Ascending aorta (tissue), 2 donors: ENCODE measurements at regions of chr21 and their contacts with region 1.

Region 1: DNA sequence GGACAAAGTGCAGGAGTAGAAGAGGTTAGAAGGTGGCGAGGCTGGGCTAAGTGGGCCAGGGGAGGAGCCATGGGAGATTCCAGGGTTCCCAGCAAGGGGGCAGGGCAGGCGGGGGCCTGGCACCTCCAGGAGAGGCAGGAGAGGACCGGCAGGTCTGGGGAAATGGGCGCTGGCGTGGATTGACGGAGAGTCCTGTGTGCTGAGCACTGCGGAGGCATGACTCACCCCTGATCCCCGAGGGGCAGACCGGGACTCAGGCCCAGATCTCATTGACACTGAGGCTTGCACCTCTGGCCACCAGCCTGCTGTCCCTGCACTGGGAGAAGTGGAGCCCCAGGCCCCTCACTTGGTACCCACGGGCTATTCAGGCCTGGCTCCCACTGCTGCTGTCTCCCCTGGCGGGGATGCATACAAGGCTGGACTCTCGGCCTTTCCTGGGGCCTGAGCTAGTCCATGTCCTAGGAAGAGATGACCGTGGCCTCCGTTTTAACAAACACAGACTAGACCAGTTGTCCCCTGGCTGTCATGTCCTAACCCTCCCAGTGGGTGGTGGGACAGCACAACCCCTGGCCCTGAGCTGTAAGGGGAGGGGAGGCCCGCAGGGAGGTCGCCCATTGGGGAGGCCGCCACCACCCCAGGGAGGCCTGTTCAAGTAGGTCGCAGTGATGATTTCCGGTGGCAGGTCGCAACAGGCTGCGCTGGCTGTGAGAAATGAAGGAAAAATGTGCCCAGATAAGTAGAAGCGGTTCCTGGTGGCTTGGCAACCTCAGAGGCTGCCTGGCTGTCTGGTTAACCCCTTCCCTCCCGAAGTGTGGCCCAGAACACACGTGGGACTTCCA is 39.7 kb downstream of the RIPK4 start:
- DNase-seq: peak; percentile 62 to 93
- H3K4me3 ChIP-seq: no peak overlapping the region
- H3K27ac ChIP-seq: peak overlapping the region; percentile 83 to 91
- H3K4me1 ChIP-seq: peaks cover 9 to 17% of the 10 kb centered on the region in 2 donors
- H3K27me3 ChIP-seq: no peaks in the 10 kb centered on the region
- CTCF ChIP-seq: no peak

Region 2: GRCh38 chr21:41761211-41762181 is 34.3 kb after region 1 on chr21:
- intact Hi-C with region 1: loop called (anchors 2 kb)
- DNase-seq: peak; percentile 33 to 80
- H3K4me3 ChIP-seq: peak overlapping the region; percentile 36 to 59
- H3K27ac ChIP-seq: peak overlapping the region; percentile 56 to 74
- H3K4me1 ChIP-seq: peaks cover 5 to 12% of the 10 kb centered on the region in 2 donors
- H3K27me3 ChIP-seq: no peaks in the 10 kb centered on the region
- CTCF ChIP-seq: no peak

Region 3: DNA sequence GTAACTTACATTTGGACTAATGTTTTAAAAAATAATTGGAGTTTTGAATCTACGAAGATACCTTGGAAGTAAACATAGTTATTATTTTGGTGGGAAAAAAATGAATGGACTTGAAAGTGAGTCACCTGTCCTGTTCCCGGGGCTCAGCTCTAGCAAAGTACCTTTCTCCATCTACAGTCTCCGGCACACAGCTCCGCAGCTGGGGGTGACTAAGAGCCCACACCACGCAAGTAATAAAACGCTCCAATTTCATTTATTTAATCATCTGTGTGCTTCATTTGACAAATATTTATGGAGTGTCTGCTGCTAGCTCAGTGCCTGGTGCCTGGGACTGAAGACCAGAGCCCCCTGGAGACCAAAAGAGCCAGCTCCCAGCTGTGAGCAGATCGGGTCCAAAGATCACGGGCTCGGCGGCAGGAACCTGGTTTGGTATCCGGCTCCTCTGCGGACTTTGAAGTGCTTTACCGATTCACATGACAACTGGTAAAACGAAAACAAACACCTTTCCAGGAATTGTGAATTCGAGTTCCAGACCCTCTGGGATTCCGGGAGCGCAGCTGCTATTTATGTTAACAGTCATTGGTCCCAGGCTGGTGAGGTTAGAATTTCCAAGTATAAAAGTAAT is 41.4 kb after region 1 on chr21:
- intact Hi-C with region 1: loop called (anchors 2 kb)
- DNase-seq: peak in 1 of 2 donors; percentile 74
- H3K4me3 ChIP-seq: peak overlapping the region; percentile 58 to 60
- H3K27ac ChIP-seq: peak overlapping the region; percentile 74 to 83
- H3K4me1 ChIP-seq: peaks cover 0 to 11% of the 10 kb centered on the region in 2 donors
- H3K27me3 ChIP-seq: no peaks in the 10 kb centered on the region
- CTCF ChIP-seq: peak in 2 of 3 experiments; percentile 15 to 28